GM18951 (cell line): ENCODE measurements at regions of chr11 and their contacts with region 1.

Region 1: GRCh38 chr11:128630367-128631230 is 43.2 kb upstream of the ETS1 start:
- POLR2A ChIP-seq: no peak

Region 2: DNA sequence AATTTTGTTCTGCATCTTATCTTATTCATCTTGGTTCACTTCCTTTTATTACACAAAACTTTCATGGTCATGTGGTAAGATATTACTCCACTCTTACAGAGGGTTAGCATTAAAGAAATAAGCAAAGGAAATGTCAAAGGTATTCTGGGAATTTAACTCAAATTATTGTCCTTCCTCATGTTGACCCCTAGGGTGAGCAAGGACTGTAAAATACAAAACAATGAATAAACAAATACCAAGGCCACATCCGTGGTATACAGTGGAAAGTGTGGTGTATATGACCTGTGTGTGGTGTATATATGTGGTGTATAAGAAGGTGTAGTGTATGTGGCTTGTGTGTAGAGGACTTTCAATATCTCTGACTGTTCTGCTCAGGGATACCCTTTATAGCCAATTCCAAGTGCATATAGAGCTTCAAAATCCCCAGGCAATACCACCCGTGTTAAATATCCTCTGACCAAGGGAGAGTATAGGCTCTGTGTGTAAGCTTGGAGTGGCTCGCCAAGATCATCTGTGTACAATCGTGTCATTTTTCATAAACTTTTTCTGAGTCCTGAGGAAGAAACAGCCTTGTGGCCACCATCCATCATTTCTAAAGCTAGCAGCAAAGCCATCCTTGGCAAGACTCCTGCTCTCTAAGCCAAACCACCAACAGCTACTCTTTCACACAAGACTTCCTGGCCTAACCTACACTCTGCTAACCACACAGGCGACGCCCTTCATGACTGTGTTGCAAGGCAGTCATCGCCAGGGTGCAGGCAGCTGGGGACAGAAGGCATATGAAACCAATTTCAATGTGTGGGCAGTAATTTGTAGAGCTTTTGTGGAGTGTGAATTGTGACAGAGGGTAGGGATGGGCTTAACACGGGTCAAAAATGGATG is 591.2 kb before region 1 on chr11:
- in situ Hi-C with region 1: loop called (anchors 25 kb)
- POLR2A ChIP-seq: no peak

Region 3: GRCh38 chr11:128164080-128164741 is 466.4 kb before region 1 on chr11:
- in situ Hi-C with region 1: loop called (anchors 5 kb)
- POLR2A ChIP-seq: no peak

Region 4: GRCh38 chr11:128290106-128290840 is 340.3 kb before region 1 on chr11:
- in situ Hi-C with region 1: loop called (anchors 10 kb)
- POLR2A ChIP-seq: peak; percentile 45

Region 5: DNA sequence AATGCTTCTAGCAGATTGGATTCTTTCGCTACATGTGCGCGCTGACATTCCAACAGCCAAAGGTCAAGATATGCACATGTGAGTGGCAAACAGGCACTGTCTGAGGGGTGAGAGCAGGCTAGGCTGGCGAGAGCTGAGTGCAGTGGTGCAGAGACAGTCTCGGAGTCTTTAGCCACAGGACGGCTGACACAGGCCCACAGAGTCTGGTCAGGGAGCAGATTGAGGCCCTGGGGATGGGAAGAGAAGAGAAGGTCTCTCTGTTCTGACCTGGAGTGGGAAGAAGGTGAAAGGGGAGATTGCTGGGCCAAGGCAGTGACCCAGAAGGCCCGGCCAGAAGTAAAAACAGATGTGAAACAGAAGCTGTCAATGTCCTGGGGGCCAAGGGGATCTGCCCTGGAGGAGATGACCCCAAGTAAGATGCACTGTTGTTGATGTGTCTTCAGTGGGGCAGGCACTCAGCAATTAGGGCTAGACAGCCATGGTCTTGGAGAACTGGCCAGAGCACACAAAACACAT is 241.1 kb before region 1 on chr11:
- in situ Hi-C with region 1: no loop called
- POLR2A ChIP-seq: no peak

Region 6: DNA sequence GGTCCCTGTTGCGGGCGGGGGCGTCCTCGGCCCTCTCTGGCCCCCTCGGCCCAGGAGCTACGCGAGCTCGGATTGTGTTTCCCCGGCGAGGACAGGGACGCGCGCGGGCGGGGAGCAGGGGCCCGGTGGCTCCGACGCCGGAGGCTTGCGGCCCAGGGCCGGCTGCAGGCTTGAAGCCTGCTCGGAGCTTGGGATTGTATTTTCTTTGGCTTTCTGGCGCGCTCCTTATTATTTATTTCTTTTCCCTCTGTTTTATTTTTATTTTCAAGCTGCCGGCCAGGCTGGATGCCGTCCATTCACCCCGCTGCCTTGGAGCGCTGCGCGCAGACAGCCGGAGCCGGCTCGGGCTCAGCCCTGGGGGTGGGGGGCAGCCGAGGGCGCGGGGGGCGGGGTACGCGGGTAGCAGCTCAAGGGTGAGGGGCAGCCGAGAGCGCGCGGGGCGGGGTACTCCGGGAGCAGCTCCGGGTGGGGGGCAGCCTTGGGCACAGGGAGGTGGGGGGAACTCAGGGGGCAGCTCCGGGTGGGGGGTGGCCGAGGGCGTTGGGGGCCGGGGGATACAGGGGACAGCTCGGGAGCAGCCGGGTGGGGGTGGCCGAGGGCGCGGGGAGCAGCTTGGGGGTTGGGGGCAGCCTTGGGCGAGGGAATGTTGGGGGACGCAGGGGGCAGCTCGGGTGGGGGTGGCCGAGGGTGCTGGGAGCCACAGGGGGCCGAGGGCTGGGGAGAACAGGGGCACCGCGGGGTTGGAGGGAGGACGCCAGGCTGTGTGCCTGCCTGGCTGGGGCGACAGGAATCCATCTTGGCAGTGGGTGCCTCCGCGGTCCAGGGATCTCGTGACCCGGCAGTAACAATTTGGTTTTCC is 193.8 kb after region 1 on chr11:
- in situ Hi-C with region 1: loop called (anchors 10 kb)
- POLR2A ChIP-seq: no peak